ENCODE measurements at regions of chrX and their contacts with region 1.

Region 1: GRCh38 chrX:107654872-107655761 is 26.8 kb downstream of the PRPS1 start:
- DNase-seq: no peak
- ATAC-seq: peak; percentile 70
- H3K4me3 ChIP-seq: no peak overlapping the region
- H3K27ac ChIP-seq: no peak overlapping the region
- H3K4me1 ChIP-seq: no peaks in the 10 kb centered on the region
- H3K27me3 ChIP-seq: no peaks in the 10 kb centered on the region
- CTCF ChIP-seq: peak; percentile 87

Region 2: DNA sequence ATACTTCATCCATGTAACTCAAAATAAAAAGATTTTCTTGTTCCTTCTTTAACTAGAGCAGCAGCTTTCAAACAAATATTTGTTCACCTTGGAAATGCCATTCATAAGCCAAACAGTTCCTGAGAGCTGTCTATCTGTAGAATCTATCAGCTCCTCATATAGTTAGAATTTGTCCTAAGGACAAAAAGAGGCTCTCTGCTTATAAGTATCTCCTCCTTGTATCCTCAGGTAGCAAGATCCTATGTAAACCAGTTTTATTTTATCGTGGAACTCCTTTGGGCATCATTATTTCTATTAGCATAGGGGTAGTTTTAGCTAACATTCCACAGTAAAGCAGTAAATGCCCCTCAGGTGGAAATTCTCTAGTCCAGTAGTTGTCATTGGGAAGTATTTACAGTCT is 1536.3 kb before region 1 on chrX:
- CTCF ChIA-PET with region 1: no interaction called
- POLR2A ChIA-PET with region 1: no interaction called
- in situ Hi-C with region 1: no loop called
- intact Hi-C with region 1: no loop called
- DNase-seq: no peak
- ATAC-seq: no peak
- H3K4me3 ChIP-seq: no peak overlapping the region
- H3K27ac ChIP-seq: no peak overlapping the region
- H3K4me1 ChIP-seq: no peaks in the 10 kb centered on the region
- H3K27me3 ChIP-seq: no peaks in the 10 kb centered on the region
- CTCF ChIP-seq: no peak

Region 3: DNA sequence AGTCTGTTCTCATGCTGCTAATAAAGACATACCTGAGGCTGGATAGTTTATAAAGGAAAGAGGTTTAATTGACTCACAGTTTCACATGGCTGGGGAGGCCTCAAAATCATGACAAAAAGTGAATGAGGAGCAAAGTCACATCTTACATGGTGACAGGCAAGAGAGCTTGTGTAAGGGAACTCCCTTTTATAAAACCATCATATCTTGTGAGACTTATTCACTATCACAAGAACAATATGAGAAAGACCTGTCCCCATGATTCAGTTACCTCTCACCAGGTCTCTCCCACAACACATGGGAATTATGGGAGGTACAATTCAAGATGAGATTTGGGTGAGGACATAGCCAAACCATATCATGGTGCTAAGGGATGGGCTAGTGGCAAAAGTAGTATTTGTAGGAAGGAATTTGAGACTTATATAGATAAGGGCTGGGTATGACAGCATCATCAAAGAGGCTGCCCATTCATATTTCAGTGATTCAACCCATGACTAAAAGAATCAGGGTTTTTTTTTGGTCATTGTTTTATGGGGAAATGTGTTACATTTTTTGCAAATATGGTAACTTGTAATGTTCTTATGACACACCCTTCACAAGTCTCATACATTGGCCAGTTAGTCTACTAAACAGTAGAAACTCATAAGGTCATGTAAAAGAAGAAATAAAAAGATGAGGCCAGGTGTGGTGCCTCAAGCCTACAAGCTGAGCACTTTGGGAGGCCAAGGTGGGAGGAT is 483.6 kb before region 1 on chrX:
- CTCF ChIA-PET with region 1: no interaction called
- POLR2A ChIA-PET with region 1: no interaction called
- in situ Hi-C with region 1: no loop called
- intact Hi-C with region 1: no loop called
- DNase-seq: no peak
- ATAC-seq: no peak
- H3K4me3 ChIP-seq: no peak overlapping the region
- H3K27ac ChIP-seq: no peak overlapping the region
- H3K4me1 ChIP-seq: no peaks in the 10 kb centered on the region
- H3K27me3 ChIP-seq: no peaks in the 10 kb centered on the region
- CTCF ChIP-seq: no peak

Region 4: GRCh38 chrX:107537815-107538214 is 117.3 kb before region 1 on chrX:
- CTCF ChIA-PET with region 1: interaction called, 11 read pairs
- POLR2A ChIA-PET with region 1: no interaction called
- in situ Hi-C with region 1: no loop called
- intact Hi-C with region 1: no loop called
- DNase-seq: peak; percentile 41
- ATAC-seq: peak; percentile 89
- H3K4me3 ChIP-seq: no peak overlapping the region
- H3K27ac ChIP-seq: no peak overlapping the region
- H3K4me1 ChIP-seq: no peaks in the 10 kb centered on the region
- H3K27me3 ChIP-seq: no peaks in the 10 kb centered on the region
- CTCF ChIP-seq: peak; percentile 81

Region 5: DNA sequence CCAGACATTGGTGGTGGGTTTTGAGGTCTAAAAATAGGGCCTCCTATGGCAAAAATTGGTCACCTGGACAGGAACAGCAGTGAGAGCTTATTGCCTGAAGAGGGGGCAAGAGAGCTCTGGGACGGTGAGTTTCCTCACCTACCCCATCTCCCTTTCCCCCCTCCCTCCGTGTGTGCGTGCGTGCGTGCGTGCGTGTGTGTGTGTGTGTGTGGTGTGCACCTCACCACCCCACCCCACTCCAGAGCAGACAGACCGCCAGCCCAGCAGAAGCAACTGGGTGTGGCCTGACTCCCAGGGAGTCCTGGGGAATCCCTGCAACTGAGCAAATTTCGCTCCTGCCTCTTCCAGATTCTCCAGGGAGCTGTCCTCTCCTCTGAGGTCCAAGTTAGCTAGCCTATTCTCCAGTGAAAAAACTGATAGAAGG is 17.9 kb after region 1 on chrX:
- CTCF ChIA-PET with region 1: interaction called, 17 read pairs
- POLR2A ChIA-PET with region 1: no interaction called
- in situ Hi-C with region 1: no loop called
- intact Hi-C with region 1: no loop called
- DNase-seq: no peak
- ATAC-seq: 0 out of 2 replicates have a peak, but pooled peaks have one; percentile 31
- H3K4me3 ChIP-seq: no peak overlapping the region
- H3K27ac ChIP-seq: no peak overlapping the region
- H3K4me1 ChIP-seq: peaks cover 25% of the 10 kb centered on the region
- H3K27me3 ChIP-seq: no peaks in the 10 kb centered on the region
- CTCF ChIP-seq: peak; percentile 89

Region 6: DNA sequence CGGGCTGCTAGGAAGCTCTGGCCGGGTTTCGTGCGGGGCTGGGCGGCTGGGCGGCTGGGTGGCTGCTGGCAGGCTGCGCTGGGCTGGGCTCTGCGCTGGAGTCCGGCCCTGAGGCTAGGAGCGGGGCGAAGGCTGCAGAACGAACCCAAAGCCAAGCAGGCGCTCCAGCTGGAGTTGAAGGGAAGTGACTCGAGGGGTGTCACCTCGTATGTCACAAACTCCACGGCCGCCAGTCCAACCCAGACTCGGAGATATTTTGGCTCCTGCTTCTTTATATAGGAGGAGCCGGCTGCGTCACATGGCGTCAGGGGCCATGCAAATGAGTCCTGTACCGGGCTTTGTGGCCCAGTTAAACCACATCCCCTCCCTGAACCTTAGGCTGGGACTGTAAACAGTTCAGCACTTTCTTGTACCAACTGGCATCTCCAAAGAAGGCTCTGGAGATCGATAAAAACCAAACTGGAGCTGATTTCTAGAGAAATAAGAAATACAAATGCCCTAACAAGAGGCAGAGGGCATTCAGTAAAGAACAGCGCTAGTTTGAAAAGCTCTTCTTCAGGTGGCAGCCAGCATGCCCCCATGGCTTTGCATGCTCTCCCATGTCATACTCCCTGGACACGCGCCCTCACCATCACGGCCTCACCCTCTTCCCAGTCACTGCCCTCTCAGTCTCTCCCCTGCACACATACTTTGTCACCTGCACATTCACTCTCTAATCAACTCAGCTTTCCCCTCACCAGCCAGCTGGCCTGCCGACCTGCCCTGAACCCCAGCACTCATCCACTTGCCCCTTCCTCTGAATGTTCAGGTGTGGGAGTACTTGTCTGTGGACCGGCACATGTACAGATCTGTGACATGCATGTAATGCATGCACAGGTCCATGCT is 61.9 kb after region 1 on chrX:
- CTCF ChIA-PET with region 1: interaction called, 6 read pairs
- POLR2A ChIA-PET with region 1: no interaction called
- in situ Hi-C with region 1: no loop called
- intact Hi-C with region 1: loop called (anchors 5 kb)
- DNase-seq: no peak
- ATAC-seq: peak; percentile 71
- H3K4me3 ChIP-seq: peak overlapping the region; percentile 64 to 87
- H3K27ac ChIP-seq: peak overlapping the region; percentile 58; the same call in 1 of the 2 replicates
- H3K4me1 ChIP-seq: peaks cover 8% of the 10 kb centered on the region; the same call in 1 of the 2 replicates
- H3K27me3 ChIP-seq: no peaks in the 10 kb centered on the region
- CTCF ChIP-seq: no peak

Region 7: DNA sequence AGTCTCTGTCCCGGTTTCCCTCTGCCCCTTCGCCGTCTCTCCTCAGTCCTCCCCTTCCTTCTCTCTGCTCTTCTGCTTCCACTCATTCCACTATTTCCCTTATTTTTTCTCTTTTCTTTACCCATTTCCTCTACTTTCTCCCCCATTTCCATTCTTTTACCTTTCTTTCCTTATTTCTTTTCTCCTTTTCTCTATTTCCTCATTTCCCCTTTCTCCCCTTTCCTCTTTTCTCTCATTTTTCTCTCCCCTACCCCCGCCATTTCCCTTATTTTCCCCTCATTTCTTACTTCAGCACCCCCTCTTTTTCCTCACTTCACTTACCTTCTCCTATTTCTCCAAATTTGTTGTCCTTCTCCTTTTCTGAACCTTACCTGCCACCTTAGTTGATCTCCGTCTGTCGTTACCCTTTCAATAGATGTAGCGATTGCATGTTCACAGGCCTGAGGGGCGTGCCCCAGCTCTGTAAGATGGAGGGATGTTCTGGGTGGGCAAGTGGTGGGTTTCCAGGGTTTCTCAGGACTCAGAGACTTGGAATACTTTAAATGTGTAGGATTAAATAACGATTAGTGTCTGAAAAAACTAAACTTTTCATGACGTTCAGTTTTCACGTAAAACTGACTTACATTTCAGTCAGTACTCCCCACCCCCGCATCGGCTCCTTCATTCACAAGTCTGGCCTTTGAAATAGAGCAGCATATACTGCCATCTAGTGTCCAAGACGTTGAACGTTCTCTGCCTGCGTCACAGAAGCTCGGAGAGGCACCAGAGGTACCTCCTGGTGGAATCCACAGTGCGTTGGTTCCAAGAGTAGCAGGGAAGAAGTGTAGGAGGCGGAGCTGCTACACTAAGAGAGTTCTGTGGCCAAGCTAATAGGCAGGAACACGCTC is 121.8 kb after region 1 on chrX:
- CTCF ChIA-PET with region 1: interaction called, 19 read pairs
- POLR2A ChIA-PET with region 1: no interaction called
- in situ Hi-C with region 1: no loop called
- intact Hi-C with region 1: loop called (anchors 1 kb)
- DNase-seq: peak; percentile 78
- ATAC-seq: peak; percentile 92
- H3K4me3 ChIP-seq: peak overlapping the region; percentile 42 to 71
- H3K27ac ChIP-seq: no peak overlapping the region; the same call in 1 of the 2 replicates
- H3K4me1 ChIP-seq: peaks cover 7% of the 10 kb centered on the region
- H3K27me3 ChIP-seq: no peaks in the 10 kb centered on the region; the same call in 1 of the 2 replicates
- CTCF ChIP-seq: peak; percentile 78

Region 8: DNA sequence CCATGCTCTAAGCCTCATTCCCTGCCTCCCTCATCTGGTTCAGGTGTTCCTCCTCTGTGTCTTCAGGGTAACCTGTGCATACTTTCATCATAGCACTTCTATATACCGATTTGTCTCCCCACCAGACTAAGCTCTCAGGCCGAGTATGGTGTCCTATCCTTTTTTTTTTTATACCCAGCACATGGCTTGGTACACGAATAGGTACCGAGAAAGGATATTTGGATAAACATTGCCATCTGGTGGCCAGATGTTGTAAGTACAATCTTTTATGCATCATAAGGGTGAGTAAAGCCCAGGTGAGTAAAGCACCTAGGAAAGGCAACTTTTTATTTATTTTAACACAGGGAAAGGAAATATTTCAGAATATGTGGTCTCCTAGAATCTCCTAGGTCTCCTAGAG is 238.9 kb after region 1 on chrX:
- CTCF ChIA-PET with region 1: interaction called, 7 read pairs
- POLR2A ChIA-PET with region 1: no interaction called
- in situ Hi-C with region 1: no loop called
- intact Hi-C with region 1: loop called (anchors 2 kb)
- DNase-seq: peak; percentile 25
- ATAC-seq: peak; percentile 94
- H3K4me3 ChIP-seq: no peak overlapping the region
- H3K27ac ChIP-seq: no peak overlapping the region
- H3K4me1 ChIP-seq: no peaks in the 10 kb centered on the region
- H3K27me3 ChIP-seq: no peaks in the 10 kb centered on the region
- CTCF ChIP-seq: peak; percentile 62

Region 9: DNA sequence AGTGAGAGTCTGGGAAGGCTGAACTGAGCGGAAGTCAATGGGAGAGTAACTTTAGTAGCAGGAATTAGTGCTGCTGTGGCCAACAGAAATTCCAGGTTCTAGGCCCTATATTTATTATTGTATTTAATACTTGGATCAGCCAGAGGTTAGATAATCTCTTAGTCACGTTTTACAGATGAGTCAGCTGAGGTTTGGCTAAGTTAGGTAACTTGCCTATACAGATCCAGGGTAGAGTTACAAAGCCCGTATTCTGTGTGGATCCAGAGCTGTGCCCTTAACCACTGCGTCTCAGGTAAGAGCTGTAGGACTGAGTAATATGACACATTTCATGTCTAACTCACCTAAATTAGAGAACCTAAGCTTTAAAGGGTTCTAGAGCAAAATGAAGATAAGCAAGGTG is 415.8 kb after region 1 on chrX:
- CTCF ChIA-PET with region 1: no interaction called
- POLR2A ChIA-PET with region 1: no interaction called
- in situ Hi-C with region 1: no loop called
- intact Hi-C with region 1: loop called (anchors 5 kb)
- DNase-seq: no peak
- ATAC-seq: peak; percentile 73; the same call in 1 of the 2 replicates
- H3K4me3 ChIP-seq: no peak overlapping the region
- H3K27ac ChIP-seq: no peak overlapping the region
- H3K4me1 ChIP-seq: peaks cover 5% of the 10 kb centered on the region
- H3K27me3 ChIP-seq: no peaks in the 10 kb centered on the region
- CTCF ChIP-seq: no peak